Activated CD4-positive, alpha-beta T cell treated with anti-CD3 and anti-CD28 coated beads for 36 hours (primary cell): ENCODE measurements at regions of chr11 and their contacts with region 1.

Region 1: GRCh38 chr11:59368238-59369022 is 9.7 kb downstream of the OR5AN1 start:
- DNase-seq: no peak
- ATAC-seq: no peak
- H3K4me3 Mint-ChIP-seq: no peak overlapping the region
- H3K27ac Mint-ChIP-seq: no peak overlapping the region
- H3K4me1 Mint-ChIP-seq: no peaks in the 10 kb centered on the region
- H3K27me3 Mint-ChIP-seq: peaks cover 20% of the 10 kb centered on the region

Region 2: DNA sequence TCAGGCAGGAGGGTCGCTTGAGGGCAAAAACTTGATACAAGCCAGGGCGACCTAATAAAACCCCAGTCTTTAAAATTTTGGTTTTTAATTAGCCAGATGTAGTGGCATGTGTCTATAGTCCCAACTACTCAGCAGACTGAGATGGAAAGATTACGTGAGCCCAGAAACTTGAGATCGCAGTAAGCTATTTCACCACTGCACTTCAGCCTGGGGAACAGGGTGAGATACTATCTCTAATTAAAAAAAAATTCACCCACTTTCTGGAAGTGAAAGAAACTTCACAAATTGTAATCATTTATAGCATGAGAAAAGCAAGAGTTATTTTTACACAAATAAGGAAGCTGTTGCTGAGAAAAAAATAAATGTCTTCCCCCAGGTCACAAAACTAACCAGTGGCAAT is 523.1 kb before region 1 on chr11:
- CTCF ChIA-PET with region 1: no interaction called
- POLR2A ChIA-PET with region 1: no interaction called
- intact Hi-C with region 1: no loop called
- DNase-seq: no peak
- ATAC-seq: no peak
- H3K4me3 Mint-ChIP-seq: no peak overlapping the region
- H3K27ac Mint-ChIP-seq: no peak overlapping the region
- H3K4me1 Mint-ChIP-seq: no peaks in the 10 kb centered on the region
- H3K27me3 Mint-ChIP-seq: peaks cover 16% of the 10 kb centered on the region

Region 3: DNA sequence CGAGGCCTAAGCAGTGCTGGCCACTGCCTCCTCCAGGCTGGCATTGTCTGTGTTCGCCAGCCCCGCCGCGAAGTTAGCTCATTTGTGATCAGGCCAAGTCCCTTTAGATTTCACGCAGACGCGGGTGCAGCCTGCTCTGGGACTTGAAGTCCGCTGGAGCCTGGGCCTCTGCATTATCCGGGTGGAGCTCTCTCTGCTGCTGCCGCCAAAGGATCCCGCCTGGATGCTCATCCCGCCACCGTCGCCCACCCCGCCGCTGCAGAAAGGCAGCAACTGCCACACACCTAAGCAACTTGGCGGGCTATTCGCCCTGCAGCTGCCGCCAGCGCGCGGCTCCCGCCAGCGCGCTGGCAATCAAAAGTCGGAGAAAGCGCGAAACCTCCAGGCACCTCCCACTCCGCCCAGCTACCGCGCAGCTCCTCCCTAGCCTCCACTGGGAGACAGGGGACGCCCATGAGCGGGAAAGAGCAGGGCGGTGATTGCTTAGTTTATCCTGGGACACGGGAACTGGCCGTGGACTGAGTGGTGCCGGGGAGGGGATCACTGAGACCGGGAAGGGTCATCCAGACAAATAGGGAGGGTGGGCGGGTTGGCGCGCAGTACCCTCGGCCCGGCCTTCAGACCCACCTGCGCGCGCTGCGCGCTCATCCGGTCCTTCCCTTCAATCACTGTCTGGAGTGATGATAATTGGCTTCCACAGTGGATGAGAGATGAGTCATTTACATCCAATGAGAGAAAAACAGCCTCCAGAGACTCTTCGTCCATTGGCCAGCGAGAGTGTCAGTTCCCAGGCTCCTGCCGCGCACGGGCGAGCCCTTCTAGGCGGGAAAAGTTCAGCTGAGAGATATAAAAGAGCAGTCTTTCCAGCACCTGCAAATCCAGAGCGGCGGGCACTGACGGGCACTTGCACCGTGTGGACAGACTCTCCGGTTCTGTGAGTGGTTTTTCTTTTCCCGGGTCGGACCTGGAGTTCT is 261.8 kb before region 1 on chr11 and contains the start of gene FAM111B:
- CTCF ChIA-PET with region 1: no interaction called
- POLR2A ChIA-PET with region 1: no interaction called
- intact Hi-C with region 1: no loop called
- DNase-seq: peak; percentile 86
- ATAC-seq: peak; percentile 87
- H3K4me3 Mint-ChIP-seq: peak within 1 kb of the TSS; percentile 79
- H3K27ac Mint-ChIP-seq: peak within 1 kb of the TSS; percentile 64
- H3K4me1 Mint-ChIP-seq: peaks cover 54% of the 10 kb centered on the region
- H3K27me3 Mint-ChIP-seq: peaks cover 23% of the 10 kb centered on the region
- total RNA-seq, gene FAM111B: 32.3 to 38.9 TPM

Region 4: DNA sequence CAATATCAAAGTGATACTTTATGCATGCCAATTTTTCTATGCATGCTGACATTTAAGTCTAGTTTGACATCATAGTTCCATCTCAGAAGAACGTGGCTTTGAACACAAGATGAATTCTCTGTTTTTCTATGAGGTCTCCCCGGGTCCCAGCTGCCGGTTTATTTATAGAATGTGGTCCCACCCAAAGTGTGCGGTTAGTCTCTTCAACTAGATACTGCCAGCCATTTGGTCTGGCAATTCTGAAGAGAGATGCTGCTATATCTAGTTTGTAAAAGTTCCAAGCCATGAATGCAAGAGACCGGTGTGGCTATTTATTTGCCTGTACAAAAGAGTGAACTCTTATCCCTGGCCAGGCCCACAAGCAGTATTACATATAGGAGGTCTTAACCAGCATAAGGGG is 48.6 kb after region 1 on chr11:
- CTCF ChIA-PET with region 1: no interaction called
- POLR2A ChIA-PET with region 1: no interaction called
- intact Hi-C with region 1: loop called in 1 of 2 experiments (anchors 5 kb)
- DNase-seq: no peak
- ATAC-seq: no peak
- H3K4me3 Mint-ChIP-seq: no peak overlapping the region
- H3K27ac Mint-ChIP-seq: no peak overlapping the region
- H3K4me1 Mint-ChIP-seq: peaks cover 8% of the 10 kb centered on the region
- H3K27me3 Mint-ChIP-seq: peaks cover 18% of the 10 kb centered on the region

Region 5: GRCh38 chr11:59510940-59511589 is 142.6 kb after region 1 on chr11 and contains the start of gene OR4D9:
- CTCF ChIA-PET with region 1: no interaction called
- POLR2A ChIA-PET with region 1: no interaction called
- intact Hi-C with region 1: no loop called
- DNase-seq: peak; percentile 15
- ATAC-seq: peak; percentile 74
- H3K4me3 Mint-ChIP-seq: no peak within 1 kb of the TSS
- H3K27ac Mint-ChIP-seq: no peak within 1 kb of the TSS
- H3K4me1 Mint-ChIP-seq: peaks cover 26% of the 10 kb centered on the region
- H3K27me3 Mint-ChIP-seq: no peaks in the 10 kb centered on the region
- total RNA-seq, gene OR4D9: not detected